ENCODE measurements at regions of chr12 and their contacts with region 1.

Region 1: GRCh38 chr12:9925708-9926393 is 6.3 kb downstream of the CLEC2A start:
- DNase-seq: no peak
- H3K4me3 ChIP-seq: no peak overlapping the region
- H3K27ac ChIP-seq: no peak overlapping the region
- H3K4me1 ChIP-seq: no peaks in the 10 kb centered on the region
- H3K27me3 ChIP-seq: no peaks in the 10 kb centered on the region
- CTCF ChIP-seq: peak in 5 of 6 experiments; percentile 20 to 54 (median 42)
- POLR2A ChIP-seq: no peak

Region 2: DNA sequence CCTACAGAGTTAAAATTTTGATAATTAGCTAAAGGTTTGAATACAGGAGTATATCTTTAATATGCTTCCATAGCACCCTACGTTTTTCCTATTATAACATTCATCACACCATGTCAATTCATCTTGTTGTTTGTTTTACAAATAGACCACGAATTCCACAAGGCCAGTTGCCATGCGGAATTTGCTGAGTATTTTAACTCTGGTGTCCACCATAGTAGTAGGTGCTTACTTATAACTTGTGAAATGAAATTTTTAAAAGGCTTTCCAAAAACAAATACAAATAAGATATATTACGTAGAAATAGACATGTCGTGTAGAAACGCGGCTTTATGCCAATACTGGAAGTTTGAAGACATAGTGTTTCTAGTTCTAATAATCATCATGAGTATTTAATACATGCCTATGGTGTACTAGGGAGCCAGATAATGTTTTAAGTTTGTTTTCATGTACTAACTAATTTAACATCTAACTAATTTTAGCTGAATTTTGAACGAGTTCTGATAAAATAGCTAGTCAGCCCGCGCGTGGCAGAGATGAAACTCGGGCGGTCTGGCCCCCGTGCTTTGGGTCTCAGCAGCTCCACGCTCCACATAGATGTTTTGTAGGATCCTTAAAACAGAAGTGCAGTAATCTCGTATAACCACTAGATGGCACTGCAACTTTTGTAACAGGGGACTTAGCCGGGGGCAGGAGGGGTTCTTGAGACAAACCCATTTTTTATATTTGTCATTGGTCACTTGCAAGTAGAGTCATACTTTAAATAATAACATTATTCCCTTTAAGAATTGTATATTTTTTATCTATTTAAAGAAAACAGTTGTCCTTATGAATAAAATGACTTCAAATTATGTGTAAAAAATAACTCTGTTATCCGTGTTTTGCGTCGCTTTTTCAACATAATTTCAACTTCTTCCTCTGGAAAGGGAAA is 175.3 kb before region 1 on chr12:
- intact Hi-C with region 1: loop called (anchors 5 kb)
- DNase-seq: peak; percentile 18 to 29
- H3K4me3 ChIP-seq: no peak overlapping the region
- H3K27ac ChIP-seq: no peak overlapping the region
- H3K4me1 ChIP-seq: no peaks in the 10 kb centered on the region
- H3K27me3 ChIP-seq: no peaks in the 10 kb centered on the region
- CTCF ChIP-seq: peak; percentile 56 to 86 (median 72)
- POLR2A ChIP-seq: no peak

Region 3: DNA sequence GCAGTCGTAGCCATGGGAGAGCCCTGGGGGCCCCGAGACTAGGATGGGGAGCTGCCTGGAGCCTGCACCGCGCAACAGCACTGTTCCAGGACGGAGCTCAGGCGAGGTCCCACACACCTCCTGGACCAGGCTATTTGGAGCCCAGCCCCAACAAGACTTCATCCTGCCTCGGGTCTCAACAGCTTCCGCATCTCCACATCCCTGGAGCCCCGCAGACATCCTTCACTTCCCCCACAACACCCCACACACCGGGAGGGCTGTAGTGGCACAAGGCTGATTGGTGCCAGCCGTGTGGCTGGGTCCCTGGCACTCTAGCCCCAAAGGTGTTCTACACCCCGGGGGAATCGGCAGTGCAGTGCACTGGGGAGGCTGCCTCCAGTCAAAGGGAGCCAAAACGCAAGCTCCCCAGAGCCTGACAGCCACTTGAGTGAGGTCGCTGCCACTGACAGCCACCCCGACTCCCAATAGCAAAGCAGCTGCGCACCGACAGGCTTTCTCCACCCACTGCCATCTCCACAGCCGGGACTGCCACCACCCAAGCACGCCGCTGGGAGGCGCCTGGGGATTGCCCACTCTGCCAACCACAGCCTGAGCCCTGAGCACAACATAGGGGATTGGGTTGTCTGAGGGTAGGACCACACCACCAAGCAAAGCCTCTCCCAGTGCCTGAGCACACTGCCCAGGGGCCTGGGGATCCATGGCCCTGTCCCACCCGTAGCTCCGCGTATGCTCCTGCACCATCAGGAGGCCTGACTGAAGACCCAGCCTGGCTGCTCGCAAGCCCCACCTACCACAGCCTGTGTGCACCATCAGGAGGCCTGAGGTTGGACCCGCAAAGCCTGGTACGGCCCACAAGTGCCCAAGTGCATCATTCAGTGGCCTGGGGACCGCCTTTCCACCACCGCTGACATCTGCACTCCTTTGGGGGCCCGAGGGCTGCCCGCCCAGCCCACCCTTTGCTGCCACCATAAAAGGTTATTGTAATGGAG is 111.7 kb before region 1 on chr12:
- intact Hi-C with region 1: loop called (anchors 5 kb)
- DNase-seq: peak; percentile 62 to 75
- H3K4me3 ChIP-seq: no peak overlapping the region
- H3K27ac ChIP-seq: no peak overlapping the region
- H3K4me1 ChIP-seq: no peaks in the 10 kb centered on the region
- H3K27me3 ChIP-seq: no peaks in the 10 kb centered on the region
- CTCF ChIP-seq: peak; percentile 42 to 82 (median 65)
- POLR2A ChIP-seq: no peak

Region 4: DNA sequence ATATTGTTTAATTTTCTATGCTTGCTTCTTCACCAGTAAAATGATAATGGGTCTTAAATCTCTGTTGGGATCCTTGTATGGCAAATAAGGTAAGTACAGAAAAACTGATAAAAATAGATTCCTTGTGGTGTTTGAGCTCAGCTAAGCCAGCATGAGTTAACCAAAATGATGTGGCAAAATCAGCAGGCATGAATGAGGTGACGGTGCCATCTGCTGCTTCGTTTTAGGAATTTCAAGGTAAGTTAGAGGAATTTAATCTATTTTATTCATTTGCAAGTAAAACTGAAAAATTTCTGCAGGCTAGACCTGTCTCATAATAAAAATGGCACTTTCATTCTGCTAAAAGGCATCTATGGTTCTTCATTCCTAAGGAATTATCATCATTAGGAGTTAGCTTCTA is 214.2 kb after region 1 on chr12:
- intact Hi-C with region 1: no loop called
- DNase-seq: peak in 1 of 2 donors; percentile 10
- H3K4me3 ChIP-seq: no peak overlapping the region
- H3K27ac ChIP-seq: no peak overlapping the region
- H3K4me1 ChIP-seq: no peaks in the 10 kb centered on the region
- H3K27me3 ChIP-seq: no peaks in the 10 kb centered on the region
- CTCF ChIP-seq: peak in 4 of 6 experiments; percentile 32 to 44 (median 43)
- POLR2A ChIP-seq: no peak